Activated CD4-positive, alpha-beta memory T cell treated with anti-CD3 and anti-CD28 coated beads for 36 hours (primary cell): ENCODE measurements at regions of chr11 and their contacts with region 1.

Region 1: DNA sequence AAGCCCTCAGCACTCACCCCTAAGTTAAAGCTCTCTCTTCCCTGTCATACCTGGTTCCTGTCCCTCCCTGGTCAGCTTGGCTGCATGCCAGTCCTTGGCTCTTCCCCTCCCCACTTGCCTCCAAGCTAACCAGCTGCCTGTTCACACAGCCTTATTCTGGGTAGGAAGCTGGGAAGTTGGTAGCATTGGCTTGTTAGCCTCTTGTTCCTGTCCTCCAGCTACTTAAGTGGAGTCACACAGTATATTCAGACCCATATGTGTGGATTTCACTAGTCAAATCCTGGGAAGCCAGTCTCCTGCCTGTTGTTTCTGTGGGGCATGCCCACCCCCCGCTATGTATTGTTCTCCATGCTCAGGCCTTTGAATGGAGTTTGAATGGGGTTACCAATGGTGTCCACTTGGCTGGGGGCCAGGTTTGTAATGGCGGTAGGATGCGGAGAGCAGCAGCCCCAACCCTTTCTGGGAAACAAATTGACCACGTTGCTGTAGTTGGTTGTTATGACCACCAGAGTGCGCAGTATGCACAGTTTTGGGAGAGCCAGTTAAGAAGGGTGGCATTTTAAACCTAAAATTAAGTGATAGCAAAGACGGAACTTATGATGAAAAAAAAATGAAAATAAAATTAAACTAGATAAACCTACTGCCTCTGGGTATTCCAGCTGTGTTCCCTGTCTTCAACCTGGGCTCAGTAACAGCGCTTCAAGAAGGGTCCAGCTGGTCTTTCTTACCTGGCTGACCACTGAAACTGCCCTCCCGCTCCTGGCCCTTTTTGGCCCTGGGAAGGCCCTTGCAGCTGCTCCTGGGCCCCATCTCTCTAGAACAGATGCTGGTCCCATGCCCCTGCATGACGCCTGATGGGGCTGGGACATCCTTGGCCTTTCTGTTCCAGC is 10.7 kb upstream of the RPS3 start:
- DNase-seq: peak; percentile 84
- H3K4me3 Mint-ChIP-seq: no peak overlapping the region
- H3K27ac Mint-ChIP-seq: no peak overlapping the region
- H3K4me1 Mint-ChIP-seq: peaks cover 10% of the 10 kb centered on the region
- H3K27me3 Mint-ChIP-seq: peaks cover 6% of the 10 kb centered on the region

Region 2: GRCh38 chr11:75270896-75271418 is 117.7 kb before region 1 on chr11:
- CTCF ChIA-PET with region 1: interaction called, 435 read pairs
- POLR2A ChIA-PET with region 1: no interaction called
- intact Hi-C with region 1: loop called (anchors 1 kb)
- DNase-seq: no peak
- H3K4me3 Mint-ChIP-seq: no peak overlapping the region
- H3K27ac Mint-ChIP-seq: no peak overlapping the region
- H3K4me1 Mint-ChIP-seq: peaks cover 32% of the 10 kb centered on the region
- H3K27me3 Mint-ChIP-seq: no peaks in the 10 kb centered on the region

Region 3: DNA sequence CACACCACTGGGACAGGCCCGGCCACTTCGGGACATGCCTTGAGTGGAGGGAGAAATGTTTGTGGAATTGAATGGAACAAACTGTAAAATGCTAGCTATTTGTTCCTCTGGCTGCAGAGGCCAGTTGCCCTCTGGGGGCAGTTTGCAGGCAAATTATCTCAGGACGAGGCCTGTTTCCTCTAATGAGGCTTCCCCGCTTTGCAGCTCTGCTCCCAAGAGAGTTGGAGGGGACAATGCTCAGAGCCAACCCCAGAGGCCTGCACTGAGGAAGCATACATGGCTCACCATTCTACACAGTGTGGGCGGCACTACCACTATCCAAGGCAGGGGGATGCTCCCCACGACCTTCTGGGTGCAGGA is 48.6 kb before region 1 on chr11:
- CTCF ChIA-PET with region 1: interaction called, 19 read pairs
- POLR2A ChIA-PET with region 1: no interaction called
- intact Hi-C with region 1: no loop called
- DNase-seq: no peak
- H3K4me3 Mint-ChIP-seq: no peak overlapping the region
- H3K27ac Mint-ChIP-seq: peak overlapping the region; percentile 89
- H3K4me1 Mint-ChIP-seq: peaks cover 79% of the 10 kb centered on the region
- H3K27me3 Mint-ChIP-seq: no peaks in the 10 kb centered on the region

Region 4: DNA sequence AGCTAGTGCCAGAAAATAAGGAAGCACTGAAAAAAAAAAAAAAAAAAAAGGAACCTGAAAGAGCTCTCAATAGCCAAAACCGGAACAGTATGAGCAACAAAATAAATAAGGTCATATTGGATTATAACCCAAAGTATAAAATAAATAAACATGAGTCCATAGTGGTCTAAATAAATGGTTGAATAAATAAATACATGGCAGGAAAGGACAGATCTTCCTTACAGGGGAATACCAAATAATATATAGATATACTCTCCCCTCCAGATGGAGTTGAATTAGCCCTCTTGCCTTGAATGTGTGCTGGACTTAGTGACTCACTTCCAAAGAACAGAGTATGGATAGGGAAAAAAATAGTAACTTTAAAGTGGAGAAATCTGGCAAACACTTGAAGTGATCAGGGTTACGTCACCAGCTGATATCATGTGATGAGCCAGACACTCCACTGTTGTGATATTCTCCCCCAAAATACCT is 22.9 kb before region 1 on chr11:
- CTCF ChIA-PET with region 1: interaction called, 12 read pairs
- POLR2A ChIA-PET with region 1: no interaction called
- intact Hi-C with region 1: no loop called
- DNase-seq: no peak
- H3K4me3 Mint-ChIP-seq: no peak overlapping the region
- H3K27ac Mint-ChIP-seq: no peak overlapping the region
- H3K4me1 Mint-ChIP-seq: peaks cover 2% of the 10 kb centered on the region
- H3K27me3 Mint-ChIP-seq: peaks cover 1% of the 10 kb centered on the region

Region 5: DNA sequence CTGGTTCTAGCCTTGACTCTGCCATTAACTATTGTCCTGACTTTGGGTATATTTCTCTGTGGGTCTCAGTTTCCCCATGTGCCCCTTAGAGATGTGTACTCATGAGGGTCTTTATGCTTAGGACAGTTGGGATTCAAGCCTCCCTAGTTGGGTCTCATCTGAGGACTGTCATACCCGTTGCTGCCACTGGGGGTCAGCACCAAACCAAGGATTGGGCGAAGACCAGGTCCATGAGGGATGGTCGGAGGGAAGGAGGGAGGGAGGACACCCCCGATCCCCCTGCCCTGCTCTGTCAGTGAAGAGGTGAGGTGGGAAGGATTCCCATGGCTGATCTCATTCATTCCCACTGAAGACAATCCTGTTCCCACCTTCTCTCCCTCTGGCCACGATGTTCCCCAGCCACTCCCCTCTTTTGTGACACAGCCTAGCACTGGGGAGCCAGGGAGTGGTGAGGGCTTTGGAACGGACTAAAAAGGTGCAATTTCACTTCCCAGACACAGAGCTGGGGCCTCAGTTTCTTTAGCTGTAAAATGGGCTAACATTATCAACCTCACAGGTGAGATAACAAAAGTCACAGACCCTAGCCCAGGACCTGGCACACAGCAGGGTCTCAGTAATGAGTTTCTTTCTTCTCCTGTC is 56.8 kb after region 1 on chr11:
- CTCF ChIA-PET with region 1: interaction called, 7 read pairs
- POLR2A ChIA-PET with region 1: no interaction called
- intact Hi-C with region 1: loop called (anchors 5 kb)
- DNase-seq: peak; percentile 80
- H3K4me3 Mint-ChIP-seq: no peak overlapping the region
- H3K27ac Mint-ChIP-seq: no peak overlapping the region
- H3K4me1 Mint-ChIP-seq: no peaks in the 10 kb centered on the region
- H3K27me3 Mint-ChIP-seq: no peaks in the 10 kb centered on the region